CD8-positive, alpha-beta memory T cell (primary cell): ENCODE measurements at regions of chr10 and their contacts with region 1.

Region 1: DNA sequence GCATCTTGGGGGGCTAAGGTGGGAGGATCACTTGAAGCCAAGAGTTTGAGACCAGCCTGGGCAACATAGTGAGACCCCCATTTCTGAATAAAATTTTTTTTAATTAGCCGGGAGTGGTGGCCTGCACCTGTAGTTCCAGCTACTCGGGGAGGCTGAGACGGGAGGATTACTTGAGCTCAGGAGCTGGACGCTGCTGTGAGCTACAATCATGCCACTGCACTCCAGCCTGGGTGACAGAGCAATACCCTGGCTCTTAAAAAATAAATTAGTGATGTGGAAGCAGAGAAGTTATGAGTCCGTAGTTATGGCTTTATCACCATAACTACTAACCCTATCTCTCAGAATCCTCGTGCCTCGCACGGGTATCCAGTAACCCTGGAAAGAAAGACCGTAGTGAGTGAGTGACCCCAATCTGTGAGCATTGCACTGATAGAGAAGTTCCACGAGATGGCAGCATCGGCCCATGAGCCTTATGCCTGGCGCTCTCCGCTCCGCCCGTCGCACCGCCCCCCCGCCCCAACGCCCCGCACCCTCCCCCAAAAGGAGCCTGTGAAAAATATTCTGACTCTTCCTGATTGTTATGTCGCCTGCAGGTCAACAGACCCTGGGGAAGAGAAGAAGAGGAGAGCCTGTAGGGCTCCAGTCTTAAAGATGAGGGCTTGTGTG is 4.9 kb upstream of the SLC29A3 start:
- DNase-seq: peak; percentile 39 to 69 (median 44)
- H3K4me3 ChIP-seq: no peak overlapping the region
- H3K4me3 Mint-ChIP-seq: peak overlapping the region in 3 of 7 donors; percentile 36 to 69 (median 40)
- H3K27ac ChIP-seq: no peak overlapping the region
- H3K27ac Mint-ChIP-seq: no peak overlapping the region
- H3K4me1 ChIP-seq: peaks cover 8% of the 10 kb centered on the region
- H3K4me1 Mint-ChIP-seq: peaks cover 10 to 16% (median 11%) of the 10 kb centered on the region in 3 donors
- H3K27me3 ChIP-seq: no peaks in the 10 kb centered on the region
- H3K27me3 Mint-ChIP-seq: peaks cover 5 to 21% of the 10 kb centered on the region in 2 donors

Region 2: DNA sequence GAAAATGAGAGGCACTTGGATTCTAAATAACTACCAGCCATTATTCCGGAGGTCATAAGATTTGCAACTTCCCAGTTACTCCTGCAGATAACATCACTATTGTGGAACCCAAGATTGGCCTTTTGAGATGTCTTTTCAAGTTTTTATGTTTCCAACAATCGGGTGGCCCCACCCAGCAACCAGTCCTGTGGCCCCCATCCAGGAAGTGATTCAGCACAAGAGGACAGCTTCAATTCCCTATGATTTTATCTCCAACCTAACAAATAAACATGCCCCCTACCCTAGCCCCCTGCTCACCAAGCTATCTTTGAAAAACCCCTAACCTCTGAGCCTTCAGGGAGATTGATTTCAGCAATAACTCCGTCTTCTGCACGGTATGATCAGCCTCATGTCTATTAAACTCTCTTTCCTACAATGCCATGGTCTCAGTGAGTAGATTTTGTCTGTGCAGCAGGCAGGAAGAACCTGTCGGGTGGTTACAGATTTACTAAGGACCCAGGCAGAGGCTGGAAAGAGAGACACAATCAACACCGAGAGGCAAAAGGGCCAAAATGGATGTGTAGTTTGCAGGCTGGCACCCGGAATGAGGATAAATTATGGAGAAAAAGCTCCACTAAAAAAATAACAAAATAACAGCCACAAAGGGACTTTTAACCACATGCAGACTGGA is 185.7 kb before region 1 on chr10:
- CTCF ChIA-PET with region 1: no interaction called
- POLR2A ChIA-PET with region 1: no interaction called
- DNase-seq: no peak
- H3K4me3 ChIP-seq: no peak overlapping the region
- H3K4me3 Mint-ChIP-seq: no peak overlapping the region
- H3K27ac ChIP-seq: no peak overlapping the region
- H3K27ac Mint-ChIP-seq: no peak overlapping the region
- H3K4me1 ChIP-seq: no peaks in the 10 kb centered on the region
- H3K4me1 Mint-ChIP-seq: peaks cover 5 to 7% (median 7%) of the 10 kb centered on the region in 3 donors
- H3K27me3 ChIP-seq: no peaks in the 10 kb centered on the region
- H3K27me3 Mint-ChIP-seq: peaks cover 16 to 48% of the 10 kb centered on the region in 2 donors

Region 3: GRCh38 chr10:71302874-71303568 is 11.1 kb before region 1 on chr10:
- CTCF ChIA-PET with region 1: interaction called, 12 read pairs
- POLR2A ChIA-PET with region 1: no interaction called
- DNase-seq: peak in 2 of 5 donors; percentile 18 to 23
- H3K4me3 ChIP-seq: no peak overlapping the region
- H3K4me3 Mint-ChIP-seq: no peak overlapping the region
- H3K27ac ChIP-seq: no peak overlapping the region
- H3K27ac Mint-ChIP-seq: peak overlapping the region in 1 of 8 donors; percentile 50
- H3K4me1 ChIP-seq: no peaks in the 10 kb centered on the region
- H3K4me1 Mint-ChIP-seq: no peaks in the 10 kb centered on the region
- H3K27me3 ChIP-seq: no peaks in the 10 kb centered on the region
- H3K27me3 Mint-ChIP-seq: peaks cover 7 to 26% of the 10 kb centered on the region in 2 donors

Region 4: GRCh38 chr10:71371750-71372166 is 57.6 kb after region 1 on chr10:
- CTCF ChIA-PET with region 1: interaction called, 17 read pairs
- POLR2A ChIA-PET with region 1: interaction called, 6 read pairs
- DNase-seq: no peak
- H3K4me3 ChIP-seq: no peak overlapping the region
- H3K4me3 Mint-ChIP-seq: no peak overlapping the region
- H3K27ac ChIP-seq: no peak overlapping the region
- H3K27ac Mint-ChIP-seq: no peak overlapping the region
- H3K4me1 ChIP-seq: peaks cover 4% of the 10 kb centered on the region
- H3K4me1 Mint-ChIP-seq: peaks cover 1 to 8% (median 5%) of the 10 kb centered on the region in 3 donors
- H3K27me3 ChIP-seq: no peaks in the 10 kb centered on the region
- H3K27me3 Mint-ChIP-seq: peaks cover 11 to 26% of the 10 kb centered on the region in 2 donors

Region 5: DNA sequence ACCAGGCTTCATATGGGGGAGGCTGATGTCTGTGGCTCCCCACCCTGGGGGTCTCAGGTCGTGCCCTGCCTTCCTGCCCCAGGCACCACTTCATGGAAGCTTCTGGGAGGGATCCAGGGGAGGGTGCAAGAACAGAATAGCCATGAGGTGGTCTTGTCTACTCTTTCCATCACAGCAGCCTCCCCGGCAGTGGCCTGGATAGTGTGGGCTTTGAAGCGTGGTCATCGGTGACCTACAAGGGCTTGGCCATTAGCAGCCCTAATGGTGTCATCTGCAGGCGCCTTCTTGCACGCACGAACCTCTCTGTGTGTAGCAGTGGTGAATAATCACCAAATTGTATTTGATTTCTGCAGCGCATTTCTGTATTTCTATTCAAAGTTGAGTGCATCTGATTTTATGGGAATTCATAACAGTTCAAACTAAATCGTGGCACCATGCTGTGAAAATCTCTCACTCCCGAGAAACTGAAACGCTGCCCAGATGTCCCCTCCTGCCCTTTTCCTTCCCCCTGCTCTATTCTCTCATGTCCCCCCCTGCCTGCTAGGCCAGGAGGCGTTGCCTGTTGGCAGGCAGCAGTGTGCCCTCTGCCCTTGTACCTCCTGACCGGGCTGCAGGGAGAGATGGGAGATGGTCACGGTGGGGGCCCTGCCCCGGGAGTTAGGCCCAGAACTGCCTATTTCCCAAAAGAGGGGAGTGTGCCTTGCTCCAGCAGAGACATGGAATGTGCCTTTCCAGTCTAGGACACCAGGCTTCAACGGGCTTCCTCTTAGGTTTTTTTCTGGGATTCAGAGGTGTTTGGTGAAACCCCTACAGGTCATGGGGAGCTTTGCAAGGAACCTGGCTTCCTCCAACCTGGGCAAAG is 117.3 kb after region 1 on chr10:
- CTCF ChIA-PET with region 1: no interaction called
- POLR2A ChIA-PET with region 1: no interaction called
- DNase-seq: no peak
- H3K4me3 ChIP-seq: no peak overlapping the region
- H3K4me3 Mint-ChIP-seq: no peak overlapping the region
- H3K27ac ChIP-seq: no peak overlapping the region
- H3K27ac Mint-ChIP-seq: peak overlapping the region in 1 of 8 donors; percentile 16
- H3K4me1 ChIP-seq: peaks cover 7% of the 10 kb centered on the region
- H3K4me1 Mint-ChIP-seq: peaks cover 9 to 11% (median 10%) of the 10 kb centered on the region in 3 donors
- H3K27me3 ChIP-seq: no peaks in the 10 kb centered on the region
- H3K27me3 Mint-ChIP-seq: peaks cover 12 to 25% of the 10 kb centered on the region in 2 donors

Region 6: DNA sequence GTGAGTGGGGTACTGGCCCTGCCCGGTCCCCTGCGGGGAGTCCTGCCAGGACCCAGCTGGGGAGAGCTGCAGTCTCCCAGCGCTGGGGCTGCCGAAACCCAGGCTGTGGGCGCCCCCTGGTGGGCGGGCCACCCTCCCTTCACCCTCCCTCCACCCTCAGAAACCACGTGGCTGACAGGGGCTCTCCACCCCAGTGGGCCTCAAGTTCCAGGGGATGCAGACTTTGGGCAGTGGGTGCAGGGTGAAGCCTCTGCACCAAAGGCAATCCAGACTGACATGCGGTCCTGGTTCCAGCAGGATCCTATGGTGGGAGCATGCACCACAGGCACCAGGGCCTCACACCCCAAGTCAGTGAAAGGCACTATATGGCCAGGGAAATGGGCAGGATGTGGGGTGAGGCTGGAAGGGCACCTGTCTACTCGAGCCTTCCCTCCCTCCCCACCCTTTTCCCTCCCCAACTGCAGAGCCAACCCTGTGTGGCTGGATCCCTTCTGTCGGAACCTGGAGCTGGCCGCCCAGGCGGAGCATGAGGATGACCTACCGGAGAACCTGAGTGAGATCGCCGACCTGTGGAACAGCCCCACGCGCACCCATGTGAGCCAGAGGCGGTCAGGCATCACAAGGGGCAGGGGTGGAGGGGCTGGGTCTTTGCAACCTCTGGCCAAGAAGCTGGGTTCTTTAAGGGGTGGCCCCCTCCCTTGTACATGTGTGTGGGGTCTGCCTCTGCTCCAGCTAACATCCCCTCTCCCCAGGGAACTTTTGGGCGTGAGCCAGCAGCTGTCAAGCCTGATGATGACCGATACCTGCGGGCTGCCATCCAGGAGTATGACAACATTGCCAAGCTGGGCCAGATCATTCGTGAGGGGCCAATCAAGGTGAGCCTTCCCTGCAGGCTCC is 498.1 kb after region 1 on chr10:
- CTCF ChIA-PET with region 1: interaction called, 20 read pairs
- POLR2A ChIA-PET with region 1: no interaction called
- DNase-seq: peak; percentile 61 to 80 (median 74)
- H3K4me3 ChIP-seq: no peak overlapping the region
- H3K4me3 Mint-ChIP-seq: no peak overlapping the region
- H3K27ac ChIP-seq: no peak overlapping the region
- H3K27ac Mint-ChIP-seq: peak overlapping the region in 1 of 8 donors; percentile 19
- H3K4me1 ChIP-seq: peaks cover 5% of the 10 kb centered on the region
- H3K4me1 Mint-ChIP-seq: no peaks in the 10 kb centered on the region
- H3K27me3 ChIP-seq: no peaks in the 10 kb centered on the region
- H3K27me3 Mint-ChIP-seq: no peaks in the 10 kb centered on the region

Region 7: GRCh38 chr10:71893920-71894319 is 579.8 kb after region 1 on chr10:
- CTCF ChIA-PET with region 1: interaction called, 21 read pairs
- POLR2A ChIA-PET with region 1: no interaction called
- DNase-seq: no peak
- H3K4me3 ChIP-seq: no peak overlapping the region
- H3K4me3 Mint-ChIP-seq: no peak overlapping the region
- H3K27ac ChIP-seq: no peak overlapping the region
- H3K27ac Mint-ChIP-seq: no peak overlapping the region
- H3K4me1 ChIP-seq: peaks cover 5% of the 10 kb centered on the region
- H3K4me1 Mint-ChIP-seq: peaks cover 5 to 6% (median 5%) of the 10 kb centered on the region in 3 donors
- H3K27me3 ChIP-seq: no peaks in the 10 kb centered on the region
- H3K27me3 Mint-ChIP-seq: peaks cover 0 to 30% of the 10 kb centered on the region in 2 donors